Sigmoid colon (tissue), 7 donors: ENCODE measurements at regions of chr2 and their contacts with region 1.

Region 1: GRCh38 chr2:39436592-39437510 is at the start of gene MAP4K3:
- DNase-seq: peak; percentile 97
- H3K4me3 ChIP-seq: peak within 1 kb of the TSS; percentile 90 to 97 (median 93)
- H3K27ac ChIP-seq: peak within 1 kb of the TSS; percentile 96 to 99 (median 98)
- H3K4me1 ChIP-seq: peaks cover 0 to 57% (median 54%) of the 10 kb centered on the region in 4 donors
- H3K27me3 ChIP-seq: no peaks in the 10 kb centered on the region
- CTCF ChIP-seq: no peak
- EP300 ChIP-seq: no peak
- POLR2A ChIP-seq: peak; percentile 70 to 79
- total RNA-seq, gene MAP4K3: 72.1 to 96.8 (median 77.4) TPM

Region 2: DNA sequence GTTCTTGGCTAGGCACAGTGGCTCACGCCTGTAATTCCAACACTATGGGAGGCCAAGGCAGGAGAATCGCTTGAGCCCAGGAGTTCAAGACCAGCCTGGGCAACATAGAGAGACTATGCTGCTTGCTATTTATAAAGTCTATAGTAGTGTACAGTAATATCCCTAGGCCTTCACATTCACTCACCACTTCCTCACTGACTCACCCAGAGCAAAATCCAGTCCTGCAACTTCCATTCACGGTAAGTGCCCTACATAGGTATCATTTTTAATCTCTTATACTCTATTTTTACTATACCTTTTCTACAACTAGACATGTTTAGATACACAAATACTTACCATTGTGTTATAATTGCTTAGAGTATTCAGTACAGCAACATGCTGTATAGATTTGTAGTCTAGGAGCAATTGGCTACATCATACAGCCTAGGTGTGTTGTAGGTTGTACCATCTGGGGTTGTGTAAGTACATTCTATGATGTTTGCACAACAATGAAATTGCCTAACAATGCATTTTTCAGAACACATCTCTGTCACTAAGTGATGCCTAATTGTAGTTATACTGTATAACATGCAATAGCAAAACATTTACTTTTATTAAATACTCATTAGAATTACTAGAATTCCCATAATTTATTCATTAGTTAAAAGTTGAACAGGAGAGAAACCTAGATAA is 569.9 kb before region 1 on chr2:
- intact Hi-C with region 1: no loop called
- DNase-seq: no peak
- H3K4me3 ChIP-seq: no peak overlapping the region
- H3K27ac ChIP-seq: no peak overlapping the region
- H3K4me1 ChIP-seq: no peaks in the 10 kb centered on the region
- H3K27me3 ChIP-seq: no peaks in the 10 kb centered on the region
- CTCF ChIP-seq: no peak
- EP300 ChIP-seq: no peak
- POLR2A ChIP-seq: no peak

Region 3: GRCh38 chr2:39356922-39357639 is 79.8 kb before region 1 on chr2:
- intact Hi-C with region 1: no loop called
- DNase-seq: no peak
- H3K4me3 ChIP-seq: no peak overlapping the region
- H3K27ac ChIP-seq: no peak overlapping the region
- H3K4me1 ChIP-seq: peaks cover 0 to 10% (median 3%) of the 10 kb centered on the region in 4 donors
- H3K27me3 ChIP-seq: no peaks in the 10 kb centered on the region
- CTCF ChIP-seq: no peak
- EP300 ChIP-seq: no peak
- POLR2A ChIP-seq: no peak

Region 4: DNA sequence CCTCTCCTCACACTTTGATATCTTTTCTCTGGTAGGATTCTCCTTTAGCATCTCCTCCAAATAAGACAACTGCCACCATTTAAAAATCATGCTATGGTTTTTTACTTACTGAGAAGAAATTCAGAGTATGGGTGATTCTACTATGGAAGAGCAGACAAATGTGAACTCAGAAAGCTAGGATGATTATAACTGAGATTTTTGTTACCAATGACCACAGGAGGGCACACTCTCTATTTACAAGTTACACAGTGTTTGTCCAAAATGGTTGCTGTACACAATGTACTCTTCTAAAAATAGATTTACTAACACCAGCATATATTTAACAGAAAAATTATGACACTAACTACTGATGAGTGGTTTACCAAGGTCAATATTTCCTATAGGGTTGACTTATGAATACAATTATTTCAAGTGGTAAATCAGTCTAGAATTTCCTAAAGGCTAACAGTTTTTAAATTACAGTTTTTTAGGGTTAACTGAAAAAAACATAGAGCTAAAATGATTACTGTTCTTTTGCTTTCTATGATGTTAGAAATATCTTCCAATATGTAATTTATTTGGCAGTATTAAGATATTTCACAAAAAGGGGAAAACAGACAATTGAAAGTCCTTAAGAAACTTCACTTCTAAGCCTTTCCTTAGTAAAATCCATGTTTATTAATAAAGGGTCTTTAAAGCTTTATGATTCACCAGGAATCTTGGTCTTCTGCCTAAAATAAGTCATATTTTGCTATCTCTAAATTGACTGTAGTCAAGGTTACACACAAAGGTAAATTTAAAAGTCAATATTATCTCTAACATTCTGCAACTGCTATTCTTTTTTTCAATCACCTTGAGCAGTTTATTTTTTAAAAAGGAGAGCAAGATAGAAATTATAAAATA is 57.0 kb before region 1 on chr2:
- intact Hi-C with region 1: loop called (anchors 2 kb)
- DNase-seq: no peak
- H3K4me3 ChIP-seq: no peak overlapping the region
- H3K27ac ChIP-seq: peak overlapping the region; percentile 9 to 74 (median 59)
- H3K4me1 ChIP-seq: peaks cover 0 to 57% (median 41%) of the 10 kb centered on the region in 4 donors
- H3K27me3 ChIP-seq: no peaks in the 10 kb centered on the region
- CTCF ChIP-seq: peak in 3 of 4 experiments; percentile 55 to 57 (median 57)
- EP300 ChIP-seq: peak in 2 of 4 donors; percentile 39 to 81
- POLR2A ChIP-seq: no peak

Region 5: GRCh38 chr2:39778962-39779851 is 342.4 kb after region 1 on chr2 and contains the start of gene THUMPD2:
- intact Hi-C with region 1: loop called (anchors 10 kb)
- DNase-seq: peak; percentile 84
- H3K4me3 ChIP-seq: peak within 1 kb of the TSS; percentile 65 to 98 (median 84)
- H3K27ac ChIP-seq: peak within 1 kb of the TSS; percentile 77 to 92 (median 85)
- H3K4me1 ChIP-seq: peaks cover 0 to 40% (median 19%) of the 10 kb centered on the region in 4 donors
- H3K27me3 ChIP-seq: no peaks in the 10 kb centered on the region
- CTCF ChIP-seq: no peak
- EP300 ChIP-seq: no peak
- POLR2A ChIP-seq: peak; percentile 48 to 54
- total RNA-seq, gene THUMPD2: 9.0 to 15.5 (median 13.3) TPM